Natural killer cell (primary cell): ENCODE measurements at regions of chr4 and their contacts with region 1.

Region 1: GRCh38 chr4:54233277-54233696 is 4.2 kb downstream of the PDGFRA start:
- DNase-seq: peak; percentile 64 to 82
- ATAC-seq: peak; percentile 83 to 85 (median 84)
- H3K4me3 ChIP-seq: peak overlapping the region; percentile 15
- H3K4me3 Mint-ChIP-seq: peak overlapping the region; percentile 82
- H3K27ac ChIP-seq: no peak overlapping the region
- H3K27ac Mint-ChIP-seq: no peak overlapping the region
- H3K4me1 ChIP-seq: peaks cover 32% of the 10 kb centered on the region
- H3K4me1 Mint-ChIP-seq: peaks cover 11 to 20% of the 10 kb centered on the region in 2 donors
- H3K27me3 ChIP-seq: peaks cover 33% of the 10 kb centered on the region
- H3K27me3 Mint-ChIP-seq: peaks cover 46% of the 10 kb centered on the region in 2 donors
- CTCF ChIP-seq: peak; percentile 62

Region 2: DNA sequence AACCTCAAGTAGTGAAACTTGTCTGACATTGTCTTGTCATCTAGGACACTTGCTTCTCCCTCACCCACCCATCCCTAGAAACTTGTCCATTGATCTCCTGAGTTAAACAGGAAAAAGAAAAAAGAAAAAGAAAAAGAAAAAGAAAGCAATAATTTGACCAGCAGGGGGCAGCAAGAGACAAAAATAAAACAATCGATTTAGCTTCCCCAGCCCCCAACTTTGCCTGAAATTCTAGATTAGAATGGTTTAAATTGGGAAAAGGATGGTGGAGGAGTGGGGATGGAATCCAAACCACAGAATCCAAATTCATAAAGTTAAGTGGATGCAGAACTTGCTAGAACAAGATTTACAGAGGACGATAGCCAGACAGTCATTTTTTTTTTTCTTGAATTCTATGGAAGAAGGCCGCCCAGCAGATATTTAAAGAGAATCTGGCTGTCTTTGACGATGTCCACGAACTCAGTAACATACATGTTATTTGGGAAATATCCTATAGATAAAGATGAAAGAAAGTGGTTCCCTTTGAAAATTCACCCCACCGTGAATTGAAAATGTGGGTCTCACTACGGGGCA is 1857.1 kb before region 1 on chr4:
- intact Hi-C with region 1: loop called (anchors 5 kb)
- DNase-seq: peak in 1 of 2 donors; percentile 53
- ATAC-seq: no peak
- H3K4me3 ChIP-seq: no peak overlapping the region
- H3K4me3 Mint-ChIP-seq: no peak overlapping the region
- H3K27ac ChIP-seq: no peak overlapping the region
- H3K27ac Mint-ChIP-seq: no peak overlapping the region
- H3K4me1 ChIP-seq: no peaks in the 10 kb centered on the region
- H3K4me1 Mint-ChIP-seq: no peaks in the 10 kb centered on the region
- H3K27me3 ChIP-seq: no peaks in the 10 kb centered on the region
- H3K27me3 Mint-ChIP-seq: no peaks in the 10 kb centered on the region
- CTCF ChIP-seq: peak; percentile 63

Region 3: DNA sequence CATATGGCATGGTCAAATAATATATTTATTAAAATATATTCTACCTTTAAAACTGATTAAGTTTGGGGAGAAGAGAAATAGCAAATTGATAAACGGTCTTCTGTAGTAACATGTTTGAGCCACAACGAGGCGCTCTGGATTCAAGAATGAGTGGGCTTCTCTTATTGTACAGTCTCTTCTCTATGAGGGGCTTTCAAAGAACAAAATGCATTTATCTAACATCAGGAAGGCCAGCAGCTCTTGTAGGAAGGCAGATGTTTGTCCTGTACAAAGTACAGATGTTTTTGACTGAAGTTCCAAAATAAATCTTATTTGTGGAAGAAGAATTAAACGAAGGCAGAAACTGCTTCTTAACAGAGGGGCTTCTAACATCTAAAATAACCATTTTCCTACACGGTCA is 1217.6 kb before region 1 on chr4:
- intact Hi-C with region 1: loop called (anchors 10 kb)
- DNase-seq: peak in 1 of 2 donors; percentile 18
- ATAC-seq: no peak
- H3K4me3 ChIP-seq: no peak overlapping the region
- H3K4me3 Mint-ChIP-seq: no peak overlapping the region
- H3K27ac ChIP-seq: no peak overlapping the region
- H3K27ac Mint-ChIP-seq: no peak overlapping the region
- H3K4me1 ChIP-seq: no peaks in the 10 kb centered on the region
- H3K4me1 Mint-ChIP-seq: peaks cover 20 to 26% of the 10 kb centered on the region in 2 donors
- H3K27me3 ChIP-seq: no peaks in the 10 kb centered on the region
- H3K27me3 Mint-ChIP-seq: no peaks in the 10 kb centered on the region
- CTCF ChIP-seq: peak; percentile 31

Region 4: DNA sequence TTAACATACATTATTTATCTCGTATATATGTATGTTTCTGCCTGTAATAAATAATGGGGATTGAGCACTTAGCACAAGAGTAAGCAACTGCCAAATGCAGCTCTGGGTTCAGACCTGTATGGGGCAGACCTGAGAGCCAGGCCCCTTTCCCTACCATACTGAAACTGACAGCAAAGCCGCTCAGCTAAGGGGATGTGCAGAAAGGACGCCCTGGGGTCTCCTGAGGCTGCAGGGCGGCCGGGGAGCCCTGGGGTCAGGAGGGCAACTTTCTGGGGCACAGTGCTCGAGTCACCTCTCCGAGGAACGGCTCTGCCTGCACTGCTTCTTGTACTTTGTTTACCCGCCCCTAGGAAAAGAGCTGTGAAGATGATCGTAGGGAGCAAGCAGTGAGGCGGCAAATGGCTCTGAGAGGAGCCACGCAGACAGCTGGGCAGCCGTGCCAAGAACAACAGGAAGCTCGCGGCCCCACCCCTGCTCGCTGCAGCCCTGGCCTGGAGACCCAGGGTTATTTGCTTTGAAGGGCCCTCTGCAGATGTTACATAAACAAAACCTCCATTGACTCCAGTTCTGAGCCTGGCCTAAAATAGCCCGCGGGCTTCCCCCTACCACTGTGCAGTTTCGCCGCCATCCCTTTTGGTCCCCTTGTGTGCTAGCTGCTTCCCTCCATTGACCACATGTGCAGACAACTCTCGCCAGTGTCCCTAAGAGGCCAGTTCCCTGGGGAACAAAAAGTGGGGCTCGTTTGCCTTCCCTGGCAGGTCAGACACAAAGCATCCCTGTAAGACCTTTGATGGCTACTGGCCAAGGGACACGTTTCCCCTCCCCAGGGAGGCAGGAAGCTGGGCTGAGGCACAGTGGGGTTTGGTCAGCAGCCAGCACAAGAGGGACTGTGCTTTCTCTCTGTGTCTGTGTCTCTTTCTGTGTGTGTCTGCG is 530.7 kb before region 1 on chr4:
- intact Hi-C with region 1: loop called (anchors 10 kb)
- DNase-seq: no peak
- ATAC-seq: peak; percentile 56 to 82 (median 58)
- H3K4me3 ChIP-seq: peak overlapping the region; percentile 9
- H3K4me3 Mint-ChIP-seq: peak overlapping the region; percentile 60
- H3K27ac ChIP-seq: peak overlapping the region; percentile 45
- H3K27ac Mint-ChIP-seq: peak overlapping the region; percentile 59 to 74
- H3K4me1 ChIP-seq: peaks cover 12% of the 10 kb centered on the region
- H3K4me1 Mint-ChIP-seq: peaks cover 15 to 16% of the 10 kb centered on the region in 2 donors
- H3K27me3 ChIP-seq: no peaks in the 10 kb centered on the region
- H3K27me3 Mint-ChIP-seq: peaks cover 0 to 2% of the 10 kb centered on the region in 2 donors
- CTCF ChIP-seq: no peak

Region 5: GRCh38 chr4:53929955-53930798 is 303.1 kb before region 1 on chr4:
- intact Hi-C with region 1: loop called (anchors 1 kb)
- DNase-seq: peak; percentile 22 to 79
- ATAC-seq: peak; percentile 54 to 77 (median 70)
- H3K4me3 ChIP-seq: no peak overlapping the region
- H3K4me3 Mint-ChIP-seq: no peak overlapping the region
- H3K27ac ChIP-seq: no peak overlapping the region
- H3K27ac Mint-ChIP-seq: no peak overlapping the region
- H3K4me1 ChIP-seq: no peaks in the 10 kb centered on the region
- H3K4me1 Mint-ChIP-seq: no peaks in the 10 kb centered on the region
- H3K27me3 ChIP-seq: no peaks in the 10 kb centered on the region
- H3K27me3 Mint-ChIP-seq: peaks cover 0 to 7% of the 10 kb centered on the region in 2 donors
- CTCF ChIP-seq: peak; percentile 69

Region 6: GRCh38 chr4:54433686-54434085 is 200.4 kb after region 1 on chr4:
- intact Hi-C with region 1: no loop called
- DNase-seq: no peak
- ATAC-seq: no peak
- H3K4me3 ChIP-seq: no peak overlapping the region
- H3K4me3 Mint-ChIP-seq: no peak overlapping the region
- H3K27ac ChIP-seq: no peak overlapping the region
- H3K27ac Mint-ChIP-seq: no peak overlapping the region
- H3K4me1 ChIP-seq: no peaks in the 10 kb centered on the region
- H3K4me1 Mint-ChIP-seq: peaks cover 0 to 7% of the 10 kb centered on the region in 2 donors
- H3K27me3 ChIP-seq: no peaks in the 10 kb centered on the region
- H3K27me3 Mint-ChIP-seq: peaks cover 3 to 5% of the 10 kb centered on the region in 2 donors
- CTCF ChIP-seq: no peak